ENCODE measurements at regions of chr19 and their contacts with region 1.

Region 1: DNA sequence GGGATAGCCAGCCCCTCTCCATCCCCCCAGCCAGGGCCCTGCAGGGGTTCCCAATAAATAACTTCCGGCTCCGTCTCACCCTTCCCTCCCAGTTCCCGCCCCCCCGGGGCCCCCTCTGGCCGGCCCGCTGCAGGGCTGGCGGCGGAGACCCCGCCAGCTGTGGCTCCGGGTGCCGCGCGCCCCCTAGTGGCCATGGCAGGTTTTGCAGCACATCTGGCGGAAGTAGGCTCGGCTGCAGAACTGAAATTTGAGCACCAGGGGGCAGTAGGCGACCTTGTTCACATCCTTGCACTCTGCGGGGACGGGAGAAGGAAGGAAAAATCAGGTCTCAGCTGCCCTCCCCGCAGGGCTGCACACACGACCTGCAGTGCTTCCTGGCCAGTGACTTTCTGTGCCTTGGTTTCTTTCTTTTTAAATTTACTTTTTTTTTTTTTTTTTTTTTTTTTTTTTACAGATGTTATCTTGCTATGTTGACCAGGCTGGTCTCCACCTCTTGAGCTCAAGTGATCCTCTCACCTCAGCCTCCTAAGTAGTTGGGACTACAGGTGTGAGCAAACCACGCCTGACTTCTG is 3.6 kb upstream of the MYO1F start:
- DNase-seq: peak; percentile 92
- H3K4me3 Mint-ChIP-seq: no peak overlapping the region
- H3K27ac Mint-ChIP-seq: no peak overlapping the region
- H3K4me1 Mint-ChIP-seq: peaks cover 32% of the 10 kb centered on the region
- H3K27me3 Mint-ChIP-seq: no peaks in the 10 kb centered on the region

Region 2: GRCh38 chr19:8412783-8413628 is 167.8 kb before region 1 on chr19 and contains the start of gene MARCHF2:
- CTCF ChIA-PET with region 1: interaction called, 20 read pairs
- intact Hi-C with region 1: loop called (anchors 1 kb)
- DNase-seq: peak; percentile 95
- H3K4me3 Mint-ChIP-seq: peak within 1 kb of the TSS; percentile 56
- H3K27ac Mint-ChIP-seq: no peak within 1 kb of the TSS
- H3K4me1 Mint-ChIP-seq: peaks cover 5% of the 10 kb centered on the region
- H3K27me3 Mint-ChIP-seq: no peaks in the 10 kb centered on the region
- total RNA-seq, gene MARCHF2: 9.2 to 10.3 TPM

Region 3: GRCh38 chr19:8513687-8514504 is 66.9 kb before region 1 on chr19 and contains the start of gene ZNF414:
- CTCF ChIA-PET with region 1: interaction called, 39 read pairs
- intact Hi-C with region 1: loop called (anchors 2 kb)
- DNase-seq: peak; percentile 98
- H3K4me3 Mint-ChIP-seq: peak within 1 kb of the TSS; percentile 97
- H3K27ac Mint-ChIP-seq: peak within 1 kb of the TSS; percentile 97
- H3K4me1 Mint-ChIP-seq: peaks cover 47% of the 10 kb centered on the region
- H3K27me3 Mint-ChIP-seq: no peaks in the 10 kb centered on the region
- total RNA-seq, gene ZNF414: 19.8 to 24.1 TPM

Region 4: DNA sequence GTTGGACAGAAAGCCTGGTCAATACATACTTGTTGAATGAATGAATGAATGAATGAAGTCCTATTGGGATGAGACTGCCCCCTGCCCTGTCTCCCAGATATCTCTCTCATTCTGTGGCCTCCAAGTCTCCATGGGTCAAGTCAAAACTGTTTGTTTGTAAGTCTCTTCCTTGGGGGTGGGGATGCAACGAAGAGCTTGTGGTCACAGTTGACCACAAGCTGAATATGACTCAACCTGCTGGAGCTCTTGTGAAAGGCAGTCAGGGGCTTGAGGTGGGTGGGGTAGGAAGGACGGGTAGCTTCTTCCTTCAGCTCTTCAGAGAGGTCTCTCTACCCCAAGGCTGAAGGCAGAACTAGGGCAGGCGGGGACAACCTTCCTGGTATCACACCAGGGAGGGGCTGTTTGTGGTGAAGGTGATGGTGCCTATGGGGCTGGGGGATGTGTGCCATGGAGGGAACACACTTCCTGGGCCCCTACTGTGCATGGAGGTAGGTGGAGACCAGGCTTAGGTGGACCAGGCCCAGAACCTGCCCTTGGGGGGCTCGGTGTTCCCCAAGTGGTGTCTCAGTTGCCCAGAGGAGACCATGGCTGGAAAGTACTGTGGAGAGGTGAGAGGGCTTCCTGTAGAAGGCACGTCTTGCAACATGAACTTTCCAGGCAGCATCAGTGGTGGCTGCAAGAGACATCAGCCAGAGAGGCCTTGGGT is 11.6 kb before region 1 on chr19:
- CTCF ChIA-PET with region 1: interaction called, 103 read pairs
- intact Hi-C with region 1: loop called (anchors 1 kb)
- DNase-seq: peak; percentile 70
- H3K4me3 Mint-ChIP-seq: no peak overlapping the region
- H3K27ac Mint-ChIP-seq: peak overlapping the region; percentile 69
- H3K4me1 Mint-ChIP-seq: peaks cover 45% of the 10 kb centered on the region
- H3K27me3 Mint-ChIP-seq: no peaks in the 10 kb centered on the region

Region 5: GRCh38 chr19:8641908-8642547 is 61.2 kb after region 1 on chr19:
- CTCF ChIA-PET with region 1: interaction called, 39 read pairs
- intact Hi-C with region 1: loop called (anchors 2 kb)
- DNase-seq: peak; percentile 10
- H3K4me3 Mint-ChIP-seq: no peak overlapping the region
- H3K27ac Mint-ChIP-seq: no peak overlapping the region
- H3K4me1 Mint-ChIP-seq: peaks cover 4% of the 10 kb centered on the region
- H3K27me3 Mint-ChIP-seq: peaks cover 9% of the 10 kb centered on the region